Sigmoid colon (tissue), 7 donors: ENCODE measurements at regions of chr5 and their contacts with region 1.

Region 1: DNA sequence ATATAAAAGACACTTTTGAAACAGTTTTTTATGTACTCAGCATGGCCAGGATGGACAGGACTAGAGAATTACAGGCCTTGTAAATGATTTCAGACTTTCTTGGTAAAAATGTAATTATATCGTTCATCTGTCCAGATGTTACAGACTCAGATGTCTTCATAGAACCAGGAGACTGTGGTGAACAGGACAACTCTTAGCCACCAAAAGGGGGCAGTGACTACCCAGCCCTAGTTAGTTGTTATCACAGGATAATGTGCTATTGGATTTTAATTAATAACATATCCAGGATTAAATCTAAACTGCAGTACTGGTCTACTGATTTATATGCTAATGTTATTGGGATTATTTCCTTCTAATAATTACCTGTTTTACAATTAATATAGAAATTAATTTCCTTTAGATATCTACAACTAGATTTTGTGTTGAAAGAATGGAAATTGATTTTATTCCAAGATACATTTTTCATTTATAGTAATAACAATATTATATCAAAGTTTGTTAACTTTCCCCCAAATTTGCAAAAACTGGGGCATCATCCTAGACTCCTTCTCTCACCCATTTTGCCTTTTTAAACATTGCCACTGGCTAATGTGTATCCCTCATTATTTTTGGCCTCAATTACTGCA is 99.4 kb downstream of the MTREX start:
- DNase-seq: no peak
- H3K4me3 ChIP-seq: no peak overlapping the region
- H3K27ac ChIP-seq: no peak overlapping the region
- H3K4me1 ChIP-seq: peaks cover 0 to 7% (median 3%) of the 10 kb centered on the region in 4 donors
- H3K27me3 ChIP-seq: no peaks in the 10 kb centered on the region
- CTCF ChIP-seq: peak; percentile 59 to 78 (median 62)
- EP300 ChIP-seq: no peak
- POLR2A ChIP-seq: no peak

Region 2: GRCh38 chr5:55344392-55344992 is 62.7 kb before region 1 on chr5:
- intact Hi-C with region 1: loop called (anchors 5 kb)
- DNase-seq: peak; percentile 69
- H3K4me3 ChIP-seq: no peak overlapping the region
- H3K27ac ChIP-seq: peak overlapping the region in 3 of 4 donors; percentile 13 to 36 (median 17)
- H3K4me1 ChIP-seq: peaks cover 0 to 26% (median 16%) of the 10 kb centered on the region in 4 donors
- H3K27me3 ChIP-seq: no peaks in the 10 kb centered on the region
- CTCF ChIP-seq: peak in 3 of 4 experiments; percentile 86 to 90 (median 88)
- EP300 ChIP-seq: no peak
- POLR2A ChIP-seq: no peak

Region 3: GRCh38 chr5:55509796-55510522 is 102.8 kb after region 1 on chr5:
- intact Hi-C with region 1: loop called (anchors 5 kb)
- DNase-seq: no peak
- H3K4me3 ChIP-seq: no peak overlapping the region
- H3K27ac ChIP-seq: peak overlapping the region in 3 of 4 donors; percentile 13 to 62 (median 20)
- H3K4me1 ChIP-seq: peaks cover 0 to 66% (median 65%) of the 10 kb centered on the region in 4 donors
- H3K27me3 ChIP-seq: no peaks in the 10 kb centered on the region
- CTCF ChIP-seq: no peak
- EP300 ChIP-seq: no peak
- POLR2A ChIP-seq: no peak